CD14-positive monocyte (primary cell): ENCODE measurements at regions of chr10 and their contacts with region 1.

Region 1: DNA sequence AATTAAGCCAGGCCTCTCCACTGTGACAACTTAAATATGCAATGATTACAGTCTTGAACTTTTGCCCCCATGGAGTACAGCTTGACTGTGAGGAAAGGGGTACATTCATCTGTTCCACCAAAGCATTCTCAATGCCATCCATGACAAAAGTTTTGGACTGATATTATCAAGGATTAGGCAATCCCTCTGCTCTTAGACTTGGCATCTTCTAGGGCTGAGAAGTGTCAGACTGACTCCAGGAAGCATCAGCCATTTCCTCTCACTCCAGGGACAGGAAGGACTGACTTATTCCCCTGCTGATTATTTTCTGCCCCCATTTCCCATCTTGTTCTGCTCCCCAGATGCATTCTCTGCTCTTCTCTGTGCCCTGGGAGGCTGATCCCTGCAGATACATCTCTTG is 69.7 kb downstream of the ZNF365 start:
- DNase-seq: no peak
- H3K4me3 ChIP-seq: no peak overlapping the region
- H3K4me3 Mint-ChIP-seq: no peak overlapping the region
- H3K27ac ChIP-seq: no peak overlapping the region
- H3K27ac Mint-ChIP-seq: peak overlapping the region in 1 of 7 donors; percentile 27
- H3K4me1 ChIP-seq: no peaks in the 10 kb centered on the region
- H3K4me1 Mint-ChIP-seq: peaks cover 4% of the 10 kb centered on the region
- H3K27me3 ChIP-seq: no peaks in the 10 kb centered on the region
- H3K27me3 Mint-ChIP-seq: peaks cover 1 to 10% (median 2%) of the 10 kb centered on the region in 3 donors
- CTCF ChIP-seq: no peak

Region 2: DNA sequence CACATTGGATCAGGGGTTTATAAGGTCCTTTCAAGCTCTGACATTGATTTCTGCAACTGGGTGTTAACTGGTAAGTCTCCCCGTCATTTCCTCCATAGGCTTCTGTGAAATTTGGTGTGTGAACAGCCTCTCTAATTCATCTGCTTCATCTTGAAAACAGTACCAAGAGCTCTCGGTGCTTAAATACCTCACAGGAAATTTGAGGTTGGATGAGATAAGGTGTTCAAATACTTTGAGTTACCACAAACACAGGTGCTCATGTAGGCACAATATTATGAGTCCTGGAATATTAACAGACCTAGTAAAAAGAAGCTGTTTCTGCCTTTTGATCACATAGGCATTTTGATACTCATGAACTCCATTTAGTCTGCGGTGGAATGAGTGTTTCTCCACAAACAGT is 260.4 kb before region 1 on chr10:
- intact Hi-C with region 1: no loop called
- DNase-seq: no peak
- H3K4me3 ChIP-seq: no peak overlapping the region
- H3K4me3 Mint-ChIP-seq: no peak overlapping the region
- H3K27ac ChIP-seq: no peak overlapping the region
- H3K27ac Mint-ChIP-seq: no peak overlapping the region
- H3K4me1 ChIP-seq: no peaks in the 10 kb centered on the region
- H3K4me1 Mint-ChIP-seq: no peaks in the 10 kb centered on the region
- H3K27me3 ChIP-seq: no peaks in the 10 kb centered on the region
- H3K27me3 Mint-ChIP-seq: no peaks in the 10 kb centered on the region
- CTCF ChIP-seq: no peak

Region 3: DNA sequence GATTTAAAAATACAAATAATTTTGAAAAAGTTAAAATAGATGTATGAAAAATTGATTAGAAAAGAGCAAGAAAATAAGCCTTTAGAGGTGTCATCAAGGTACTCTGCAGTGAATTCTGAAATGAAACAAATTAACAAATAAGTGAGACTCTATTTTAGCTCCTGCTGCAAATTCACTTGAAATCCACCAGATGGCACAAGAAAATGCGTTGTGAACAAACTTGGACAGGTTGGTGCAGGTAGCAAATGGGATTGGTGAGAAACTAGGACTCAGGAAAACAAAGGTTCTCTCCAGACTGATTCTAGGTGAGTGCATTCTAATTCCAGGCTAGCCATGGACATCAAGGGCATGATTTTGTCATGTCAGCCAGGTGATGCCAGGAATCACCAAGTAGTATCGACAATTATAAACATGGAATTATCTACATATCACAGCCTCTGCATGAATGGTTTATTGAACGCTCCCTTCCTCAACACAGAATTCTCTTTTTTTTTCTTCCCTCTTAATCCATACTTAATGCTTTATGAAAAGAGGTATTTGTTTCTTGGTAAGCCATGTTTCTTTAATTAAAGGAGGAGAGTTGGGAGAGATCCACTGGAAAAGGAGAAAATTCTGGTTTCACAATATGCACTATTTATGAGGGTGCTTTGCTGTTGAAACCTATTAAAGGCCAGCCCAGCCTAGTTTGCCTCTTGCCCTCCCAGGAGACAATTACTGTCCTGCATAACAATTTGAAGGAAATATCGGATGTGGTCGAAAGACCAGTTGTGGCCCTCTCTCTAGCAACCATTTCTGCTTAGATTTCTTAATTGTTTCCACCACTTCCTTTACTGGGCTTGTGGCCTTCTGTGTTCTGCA is 48.4 kb after region 1 on chr10:
- intact Hi-C with region 1: loop called in 1 of 2 experiments (anchors 10 kb)
- DNase-seq: peak; percentile 23 to 49 (median 36)
- H3K4me3 ChIP-seq: peak overlapping the region in 1 of 3 experiments; percentile 44
- H3K4me3 Mint-ChIP-seq: peak overlapping the region; percentile 16 to 58
- H3K27ac ChIP-seq: peak overlapping the region; percentile 65 to 68
- H3K27ac Mint-ChIP-seq: peak overlapping the region; percentile 84 to 96 (median 93)
- H3K4me1 ChIP-seq: peaks cover 46 to 56% of the 10 kb centered on the region in 2 donors
- H3K4me1 Mint-ChIP-seq: peaks cover 52% of the 10 kb centered on the region
- H3K27me3 ChIP-seq: no peaks in the 10 kb centered on the region
- H3K27me3 Mint-ChIP-seq: no peaks in the 10 kb centered on the region
- CTCF ChIP-seq: peak; percentile 78

Region 4: DNA sequence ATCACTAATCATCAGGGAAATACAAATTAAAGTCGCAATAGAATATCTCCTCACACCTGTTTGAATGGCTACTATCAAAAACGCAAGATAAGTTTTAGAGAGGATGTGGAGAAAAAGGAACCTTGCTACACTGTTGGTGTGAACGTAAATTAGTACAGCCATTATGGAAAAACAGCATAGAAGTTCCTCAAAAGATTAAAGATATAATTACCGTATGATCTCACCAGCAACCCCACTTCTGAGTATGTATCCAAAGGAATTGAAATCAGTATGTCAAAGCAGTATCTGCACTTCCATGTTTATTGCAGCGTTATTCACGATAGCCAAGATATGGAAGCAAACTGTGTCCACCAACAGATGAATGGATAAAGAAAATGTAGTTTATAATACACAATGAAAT is 94.7 kb after region 1 on chr10:
- intact Hi-C with region 1: no loop called
- DNase-seq: peak in 2 of 3 donors; percentile 30 to 45
- H3K4me3 ChIP-seq: no peak overlapping the region
- H3K4me3 Mint-ChIP-seq: peak overlapping the region in 1 of 2 donors; percentile 3
- H3K27ac ChIP-seq: peak overlapping the region in 1 of 2 donors; percentile 49
- H3K27ac Mint-ChIP-seq: peak overlapping the region; percentile 16 to 98 (median 89)
- H3K4me1 ChIP-seq: peaks cover 50 to 64% of the 10 kb centered on the region in 2 donors
- H3K4me1 Mint-ChIP-seq: peaks cover 52% of the 10 kb centered on the region
- H3K27me3 ChIP-seq: no peaks in the 10 kb centered on the region
- H3K27me3 Mint-ChIP-seq: peaks cover 0 to 12% (median 2%) of the 10 kb centered on the region in 3 donors
- CTCF ChIP-seq: no peak

Region 5: GRCh38 chr10:62554632-62555199 is 110.8 kb after region 1 on chr10:
- intact Hi-C with region 1: loop called (anchors 5 to 10 kb)
- DNase-seq: peak; percentile 30 to 56 (median 54)
- H3K4me3 ChIP-seq: no peak overlapping the region
- H3K4me3 Mint-ChIP-seq: no peak overlapping the region
- H3K27ac ChIP-seq: no peak overlapping the region
- H3K27ac Mint-ChIP-seq: peak overlapping the region in 2 of 7 donors; percentile 16 to 72
- H3K4me1 ChIP-seq: no peaks in the 10 kb centered on the region
- H3K4me1 Mint-ChIP-seq: no peaks in the 10 kb centered on the region
- H3K27me3 ChIP-seq: no peaks in the 10 kb centered on the region
- H3K27me3 Mint-ChIP-seq: peaks cover 3 to 18% (median 10%) of the 10 kb centered on the region in 3 donors
- CTCF ChIP-seq: peak; percentile 78

Region 6: GRCh38 chr10:63003816-63004453 is 560.1 kb after region 1 on chr10:
- intact Hi-C with region 1: no loop called
- DNase-seq: no peak
- H3K4me3 ChIP-seq: no peak overlapping the region
- H3K4me3 Mint-ChIP-seq: no peak overlapping the region
- H3K27ac ChIP-seq: no peak overlapping the region
- H3K27ac Mint-ChIP-seq: no peak overlapping the region
- H3K4me1 ChIP-seq: no peaks in the 10 kb centered on the region
- H3K4me1 Mint-ChIP-seq: no peaks in the 10 kb centered on the region
- H3K27me3 ChIP-seq: peaks cover 3 to 5% of the 10 kb centered on the region in 2 donors
- H3K27me3 Mint-ChIP-seq: peaks cover 5 to 14% (median 8%) of the 10 kb centered on the region in 3 donors
- CTCF ChIP-seq: peak; percentile 57